CD8-positive, alpha-beta T cell (primary cell): ENCODE measurements at regions of chr1 and their contacts with region 1.

Region 1: DNA sequence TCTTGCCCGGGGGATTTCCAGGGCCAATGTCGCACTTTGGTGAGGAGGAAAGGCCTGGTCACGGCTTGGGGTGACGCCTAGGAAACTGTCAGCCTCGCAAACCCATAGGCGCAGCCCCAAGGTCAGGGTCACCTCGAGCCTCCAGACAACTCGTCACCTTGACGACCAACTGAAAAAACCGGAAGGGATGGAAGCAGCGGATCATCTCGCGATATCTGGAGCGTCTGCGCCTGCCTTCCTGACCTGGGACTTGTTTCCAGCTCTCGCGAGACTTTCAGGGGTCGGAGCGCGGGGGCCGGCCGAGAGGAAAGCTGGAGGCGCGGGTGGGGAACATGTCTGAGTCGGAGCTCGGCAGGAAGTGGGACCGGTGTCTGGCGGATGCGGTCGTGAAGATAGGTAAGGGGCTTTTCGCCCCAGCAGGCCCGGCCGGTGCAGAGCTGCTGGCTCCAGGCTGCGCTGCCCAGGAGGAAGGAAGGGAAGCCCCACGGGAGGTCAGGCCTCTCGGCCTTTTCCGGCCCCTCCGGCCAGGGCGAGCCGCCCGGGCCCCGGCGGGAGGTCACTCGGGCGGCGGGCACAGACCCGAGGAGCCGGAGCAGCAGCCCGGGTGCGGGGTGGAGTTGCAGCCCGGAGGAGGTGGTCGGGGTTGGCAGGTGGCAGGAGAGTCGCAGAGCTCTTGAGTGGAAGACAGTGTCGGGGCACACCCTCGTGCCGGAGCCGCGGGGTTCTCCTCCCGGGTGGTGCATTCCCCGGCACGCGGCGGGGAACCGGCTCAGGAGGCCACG is 47.2 kb upstream of the NBL1 start:
- DNase-seq: peak; percentile 92 to 100 (median 96)
- ATAC-seq: peak; percentile 69
- H3K4me3 ChIP-seq: peak overlapping the region; percentile 67 to 76
- H3K4me3 Mint-ChIP-seq: peak overlapping the region; percentile 92
- H3K27ac ChIP-seq: peak overlapping the region; percentile 96 to 99
- H3K27ac Mint-ChIP-seq: peak overlapping the region; percentile 100
- H3K4me1 ChIP-seq: peaks cover 50% of the 10 kb centered on the region
- H3K4me1 Mint-ChIP-seq: peaks cover 48% of the 10 kb centered on the region
- H3K27me3 ChIP-seq: no peaks in the 10 kb centered on the region
- H3K27me3 Mint-ChIP-seq: no peaks in the 10 kb centered on the region
- CTCF ChIP-seq: no peak

Region 2: GRCh38 chr1:18956369-18957135 is 640.4 kb before region 1 on chr1 and contains the start of gene IFFO2:
- CTCF ChIA-PET with region 1: no interaction called
- POLR2A ChIA-PET with region 1: no interaction called
- intact Hi-C with region 1: loop called in 1 of 2 experiments (anchors 5 kb)
- DNase-seq: peak; percentile 96 to 100 (median 98)
- ATAC-seq: peak; percentile 82
- H3K4me3 ChIP-seq: peak within 1 kb of the TSS; percentile 66 to 80
- H3K4me3 Mint-ChIP-seq: peak within 1 kb of the TSS; percentile 96
- H3K27ac ChIP-seq: peak within 1 kb of the TSS; percentile 36 to 52
- H3K27ac Mint-ChIP-seq: peak within 1 kb of the TSS; percentile 97
- H3K4me1 ChIP-seq: peaks cover 57% of the 10 kb centered on the region
- H3K4me1 Mint-ChIP-seq: peaks cover 59% of the 10 kb centered on the region
- H3K27me3 ChIP-seq: peaks cover 0 to 2% of the 10 kb centered on the region in 2 experiments
- H3K27me3 Mint-ChIP-seq: no peaks in the 10 kb centered on the region
- CTCF ChIP-seq: no peak
- total RNA-seq, gene IFFO2: 92.6 to 107 TPM

Region 3: GRCh38 chr1:19251305-19252196 is 345.4 kb before region 1 on chr1 and contains the starts of genes EMC1 and MRTO4:
- CTCF ChIA-PET with region 1: no interaction called
- POLR2A ChIA-PET with region 1: interaction called, 3 read pairs
- intact Hi-C with region 1: loop called in 1 of 2 experiments (anchors 1 kb)
- DNase-seq: peak; percentile 83 to 94 (median 87)
- ATAC-seq: peak; percentile 93
- H3K4me3 ChIP-seq: peak within 1 kb of the TSS; percentile 66 to 88
- H3K4me3 Mint-ChIP-seq: peak within 1 kb of the TSS; percentile 95
- H3K27ac ChIP-seq: peak within 1 kb of the TSS; percentile 83 to 98
- H3K27ac Mint-ChIP-seq: peak within 1 kb of the TSS; percentile 94
- H3K4me1 ChIP-seq: peaks cover 34% of the 10 kb centered on the region
- H3K4me1 Mint-ChIP-seq: peaks cover 38% of the 10 kb centered on the region
- H3K27me3 ChIP-seq: no peaks in the 10 kb centered on the region
- H3K27me3 Mint-ChIP-seq: no peaks in the 10 kb centered on the region
- CTCF ChIP-seq: no peak
- total RNA-seq, gene EMC1: 28.2 to 33.5 TPM
- total RNA-seq, gene MRTO4: 18.9 to 19.5 TPM

Region 4: GRCh38 chr1:19341201-19342072 is 255.5 kb before region 1 on chr1:
- CTCF ChIA-PET with region 1: no interaction called
- POLR2A ChIA-PET with region 1: no interaction called
- intact Hi-C with region 1: no loop called
- DNase-seq: peak; percentile 55 to 79 (median 72)
- ATAC-seq: peak; percentile 94
- H3K4me3 ChIP-seq: no peak overlapping the region
- H3K4me3 Mint-ChIP-seq: no peak overlapping the region
- H3K27ac ChIP-seq: no peak overlapping the region
- H3K27ac Mint-ChIP-seq: no peak overlapping the region
- H3K4me1 ChIP-seq: no peaks in the 10 kb centered on the region
- H3K4me1 Mint-ChIP-seq: peaks cover 6% of the 10 kb centered on the region
- H3K27me3 ChIP-seq: no peaks in the 10 kb centered on the region
- H3K27me3 Mint-ChIP-seq: no peaks in the 10 kb centered on the region
- CTCF ChIP-seq: peak; percentile 88

Region 5: GRCh38 chr1:19462781-19463503 is 134.0 kb before region 1 on chr1:
- CTCF ChIA-PET with region 1: interaction called, 3 read pairs
- POLR2A ChIA-PET with region 1: interaction called, 9 read pairs
- intact Hi-C with region 1: loop called (anchors 2 to 5 kb)
- DNase-seq: peak; percentile 55 to 90 (median 73)
- ATAC-seq: peak; percentile 76
- H3K4me3 ChIP-seq: peak overlapping the region; percentile 6 to 43
- H3K4me3 Mint-ChIP-seq: peak overlapping the region; percentile 80
- H3K27ac ChIP-seq: peak overlapping the region; percentile 71 to 78
- H3K27ac Mint-ChIP-seq: peak overlapping the region; percentile 96
- H3K4me1 ChIP-seq: peaks cover 98% of the 10 kb centered on the region
- H3K4me1 Mint-ChIP-seq: peaks cover 87% of the 10 kb centered on the region
- H3K27me3 ChIP-seq: no peaks in the 10 kb centered on the region
- H3K27me3 Mint-ChIP-seq: no peaks in the 10 kb centered on the region
- CTCF ChIP-seq: no peak

Region 6: DNA sequence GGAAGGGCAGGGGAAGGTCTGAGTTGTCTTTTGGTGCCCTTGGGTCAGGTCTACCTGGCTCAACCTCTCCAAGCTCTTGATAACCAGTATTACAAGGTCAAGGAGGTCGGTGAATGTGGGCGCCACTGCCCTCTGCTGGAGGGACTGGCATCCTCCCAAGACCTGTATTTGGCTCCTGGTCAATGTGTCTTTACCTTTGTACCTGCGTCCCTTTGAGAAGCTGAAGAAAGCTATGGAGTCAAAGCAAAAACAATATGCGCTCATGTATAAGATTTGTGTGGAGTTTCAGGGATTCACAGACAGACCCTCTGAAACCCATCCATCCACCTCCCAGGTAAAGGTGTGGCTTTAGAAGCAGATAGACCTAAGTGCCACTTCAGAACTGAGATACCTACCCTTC is 14.6 kb before region 1 on chr1:
- CTCF ChIA-PET with region 1: interaction called, 32 read pairs
- POLR2A ChIA-PET with region 1: interaction called, 5 read pairs
- intact Hi-C with region 1: no loop called
- DNase-seq: peak; percentile 58 to 87 (median 80)
- ATAC-seq: peak; percentile 78
- H3K4me3 ChIP-seq: no peak overlapping the region
- H3K4me3 Mint-ChIP-seq: no peak overlapping the region
- H3K27ac ChIP-seq: no peak overlapping the region
- H3K27ac Mint-ChIP-seq: no peak overlapping the region
- H3K4me1 ChIP-seq: no peaks in the 10 kb centered on the region
- H3K4me1 Mint-ChIP-seq: peaks cover 8% of the 10 kb centered on the region
- H3K27me3 ChIP-seq: no peaks in the 10 kb centered on the region
- H3K27me3 Mint-ChIP-seq: no peaks in the 10 kb centered on the region
- CTCF ChIP-seq: peak; percentile 87

Region 7: DNA sequence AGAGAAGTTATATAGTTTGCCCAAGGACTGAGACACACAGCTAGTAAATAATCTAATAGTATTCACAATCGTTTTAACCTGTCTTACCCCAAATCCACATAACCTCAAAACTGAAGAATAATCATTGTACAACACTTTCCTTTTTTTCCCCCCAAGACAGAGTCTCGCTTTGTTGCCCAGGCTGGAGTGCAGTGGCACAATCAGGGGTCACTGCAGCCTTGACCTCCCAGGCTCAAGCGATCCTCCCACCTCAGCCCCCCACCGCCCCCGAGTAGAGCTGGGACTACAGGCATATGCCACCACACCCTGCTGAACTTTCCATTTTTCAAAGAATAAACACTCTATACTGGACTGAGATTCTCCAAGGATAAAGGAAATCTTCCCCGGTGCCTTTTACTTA is 18.5 kb after region 1 on chr1:
- CTCF ChIA-PET with region 1: interaction called, 3 read pairs
- POLR2A ChIA-PET with region 1: interaction called, 3 read pairs
- intact Hi-C with region 1: loop called in 1 of 2 experiments (anchors 2 kb)
- DNase-seq: no peak
- ATAC-seq: no peak
- H3K4me3 ChIP-seq: no peak overlapping the region
- H3K4me3 Mint-ChIP-seq: no peak overlapping the region
- H3K27ac ChIP-seq: no peak overlapping the region
- H3K27ac Mint-ChIP-seq: no peak overlapping the region
- H3K4me1 ChIP-seq: no peaks in the 10 kb centered on the region
- H3K4me1 Mint-ChIP-seq: peaks cover 31% of the 10 kb centered on the region
- H3K27me3 ChIP-seq: no peaks in the 10 kb centered on the region
- H3K27me3 Mint-ChIP-seq: no peaks in the 10 kb centered on the region
- CTCF ChIP-seq: no peak

Region 8: GRCh38 chr1:19758227-19758830 is 161.4 kb after region 1 on chr1:
- CTCF ChIA-PET with region 1: no interaction called
- POLR2A ChIA-PET with region 1: no interaction called
- intact Hi-C with region 1: no loop called
- DNase-seq: no peak
- ATAC-seq: no peak
- H3K4me3 ChIP-seq: no peak overlapping the region
- H3K4me3 Mint-ChIP-seq: no peak overlapping the region
- H3K27ac ChIP-seq: no peak overlapping the region
- H3K27ac Mint-ChIP-seq: no peak overlapping the region
- H3K4me1 ChIP-seq: no peaks in the 10 kb centered on the region
- H3K4me1 Mint-ChIP-seq: no peaks in the 10 kb centered on the region
- H3K27me3 ChIP-seq: no peaks in the 10 kb centered on the region
- H3K27me3 Mint-ChIP-seq: no peaks in the 10 kb centered on the region
- CTCF ChIP-seq: no peak

Region 9: DNA sequence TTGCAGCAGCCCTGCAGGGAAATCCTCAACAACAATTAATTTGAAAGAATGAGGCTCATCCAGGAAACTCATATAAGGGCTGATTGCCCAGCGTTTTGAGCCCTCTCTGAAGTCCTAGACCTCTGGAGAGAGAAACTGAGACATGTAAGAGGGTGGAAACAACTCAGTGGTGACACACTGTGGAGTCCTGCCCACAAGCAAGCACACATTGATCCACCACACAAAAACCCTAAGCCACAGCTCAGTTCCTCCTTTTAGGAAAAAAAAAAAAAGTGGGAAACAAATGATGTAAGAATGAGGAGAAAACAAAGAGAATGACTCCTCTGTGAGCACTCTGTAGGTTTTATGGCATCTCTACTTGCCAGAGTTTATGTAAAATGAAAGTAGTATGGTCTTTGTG is 450.2 kb after region 1 on chr1:
- CTCF ChIA-PET with region 1: no interaction called
- POLR2A ChIA-PET with region 1: no interaction called
- intact Hi-C with region 1: no loop called
- DNase-seq: no peak
- ATAC-seq: no peak
- H3K4me3 ChIP-seq: no peak overlapping the region
- H3K4me3 Mint-ChIP-seq: no peak overlapping the region
- H3K27ac ChIP-seq: no peak overlapping the region
- H3K27ac Mint-ChIP-seq: no peak overlapping the region
- H3K4me1 ChIP-seq: no peaks in the 10 kb centered on the region
- H3K4me1 Mint-ChIP-seq: no peaks in the 10 kb centered on the region
- H3K27me3 ChIP-seq: no peaks in the 10 kb centered on the region
- H3K27me3 Mint-ChIP-seq: no peaks in the 10 kb centered on the region
- CTCF ChIP-seq: no peak